Right cardiac atrium (tissue), 5 donors: ENCODE measurements at regions of chr10 and their contacts with region 1.

Region 1: GRCh38 chr10:4755299-4755989 is 70.6 kb upstream of the AKR1E2 start:
- DNase-seq: no peak
- ATAC-seq: no peak
- H3K4me3 ChIP-seq: no peak overlapping the region
- H3K27ac ChIP-seq: no peak overlapping the region
- H3K4me1 ChIP-seq: no peaks in the 10 kb centered on the region
- H3K27me3 ChIP-seq: no peaks in the 10 kb centered on the region

Region 2: GRCh38 chr10:4622384-4622783 is 133.1 kb before region 1 on chr10:
- intact Hi-C with region 1: no loop called
- DNase-seq: no peak
- ATAC-seq: no peak
- H3K4me3 ChIP-seq: no peak overlapping the region
- H3K27ac ChIP-seq: no peak overlapping the region
- H3K4me1 ChIP-seq: no peaks in the 10 kb centered on the region
- H3K27me3 ChIP-seq: no peaks in the 10 kb centered on the region

Region 3: GRCh38 chr10:4678023-4678950 is 77.2 kb before region 1 on chr10:
- intact Hi-C with region 1: loop called in 1 of 4 experiments (anchors 10 kb)
- DNase-seq: no peak
- ATAC-seq: peak; percentile 83 to 89
- H3K4me3 ChIP-seq: no peak overlapping the region
- H3K27ac ChIP-seq: peak overlapping the region; percentile 97
- H3K4me1 ChIP-seq: peaks cover 2% of the 10 kb centered on the region
- H3K27me3 ChIP-seq: no peaks in the 10 kb centered on the region